Ascending aorta (tissue), 2 donors: ENCODE measurements at regions of chr10 and their contacts with region 1.

Region 1: GRCh38 chr10:102604379-102604960 is 39.8 kb upstream of the TRIM8 start:
- DNase-seq: no peak
- H3K4me3 ChIP-seq: no peak overlapping the region
- H3K27ac ChIP-seq: peak overlapping the region; percentile 84 to 87
- H3K4me1 ChIP-seq: peaks cover 13 to 27% of the 10 kb centered on the region in 2 donors
- H3K27me3 ChIP-seq: no peaks in the 10 kb centered on the region
- CTCF ChIP-seq: no peak

Region 2: DNA sequence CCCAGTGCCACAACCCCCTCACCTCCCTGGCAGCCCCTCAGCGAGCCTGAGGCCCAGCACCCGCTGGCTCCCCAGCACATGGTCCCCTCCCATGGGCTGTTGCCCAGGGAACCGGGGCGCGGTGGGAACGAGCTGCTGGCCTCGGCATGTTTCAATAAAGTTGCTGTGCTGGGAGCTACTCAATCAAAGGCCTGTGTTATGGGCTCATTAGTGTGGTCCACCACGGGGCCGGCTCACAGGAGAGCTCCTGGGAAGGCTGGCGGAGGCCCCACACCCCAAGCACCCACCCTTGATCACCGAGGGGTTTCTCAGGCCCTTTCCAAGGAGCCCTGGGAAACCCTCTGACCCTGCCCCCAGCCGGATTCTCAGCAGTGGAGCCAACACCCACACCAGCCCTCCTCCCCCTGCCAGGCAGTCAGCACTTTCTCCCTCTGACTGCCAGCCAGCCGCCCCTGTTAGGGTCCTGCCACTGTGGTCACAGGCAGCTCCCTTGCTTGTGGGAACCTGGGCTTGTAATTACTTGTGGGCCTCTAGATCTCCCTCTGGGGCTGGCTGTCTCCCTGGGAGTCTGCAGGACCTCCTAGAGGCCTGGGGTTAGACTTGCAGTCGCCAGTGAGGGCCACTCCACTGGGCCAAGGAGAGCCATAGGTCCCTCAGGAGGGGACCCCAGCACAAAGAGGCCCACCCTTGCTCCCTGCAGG is 15.0 kb after region 1 on chr10:
- intact Hi-C with region 1: loop called (anchors 2 kb)
- DNase-seq: no peak
- H3K4me3 ChIP-seq: no peak overlapping the region
- H3K27ac ChIP-seq: peak overlapping the region; percentile 92 to 95
- H3K4me1 ChIP-seq: peaks cover 31 to 42% of the 10 kb centered on the region in 2 donors
- H3K27me3 ChIP-seq: no peaks in the 10 kb centered on the region
- CTCF ChIP-seq: no peak